ENCODE measurements at regions of chr10 and their contacts with region 1.

Region 1: GRCh38 chr10:43093423-43094076 is 16.7 kb downstream of the RET start:
- DNase-seq: no peak
- ATAC-seq: no peak
- H3K4me3 ChIP-seq: no peak overlapping the region
- H3K27ac ChIP-seq: no peak overlapping the region
- H3K4me1 ChIP-seq: no peaks in the 10 kb centered on the region
- H3K27me3 ChIP-seq: no peaks in the 10 kb centered on the region
- CTCF ChIP-seq: no peak
- POLR2A ChIP-seq: no peak

Region 2: GRCh38 chr10:42875792-42876460 is 217.6 kb before region 1 on chr10:
- in situ Hi-C with region 1: loop called in 2 of 4 experiments (anchors 10 kb)
- intact Hi-C with region 1: no loop called
- DNase-seq: no peak
- ATAC-seq: no peak
- H3K4me3 ChIP-seq: no peak overlapping the region
- H3K27ac ChIP-seq: no peak overlapping the region
- H3K4me1 ChIP-seq: peaks cover 0 to 4% of the 10 kb centered on the region in 2 donors
- H3K27me3 ChIP-seq: no peaks in the 10 kb centered on the region
- CTCF ChIP-seq: no peak
- POLR2A ChIP-seq: no peak

Measured in gastrocnemius medialis (tissue), 4 donors.